GM13977 (cell line): ENCODE measurements at regions of chr12 and their contacts with region 1.

Region 1: DNA sequence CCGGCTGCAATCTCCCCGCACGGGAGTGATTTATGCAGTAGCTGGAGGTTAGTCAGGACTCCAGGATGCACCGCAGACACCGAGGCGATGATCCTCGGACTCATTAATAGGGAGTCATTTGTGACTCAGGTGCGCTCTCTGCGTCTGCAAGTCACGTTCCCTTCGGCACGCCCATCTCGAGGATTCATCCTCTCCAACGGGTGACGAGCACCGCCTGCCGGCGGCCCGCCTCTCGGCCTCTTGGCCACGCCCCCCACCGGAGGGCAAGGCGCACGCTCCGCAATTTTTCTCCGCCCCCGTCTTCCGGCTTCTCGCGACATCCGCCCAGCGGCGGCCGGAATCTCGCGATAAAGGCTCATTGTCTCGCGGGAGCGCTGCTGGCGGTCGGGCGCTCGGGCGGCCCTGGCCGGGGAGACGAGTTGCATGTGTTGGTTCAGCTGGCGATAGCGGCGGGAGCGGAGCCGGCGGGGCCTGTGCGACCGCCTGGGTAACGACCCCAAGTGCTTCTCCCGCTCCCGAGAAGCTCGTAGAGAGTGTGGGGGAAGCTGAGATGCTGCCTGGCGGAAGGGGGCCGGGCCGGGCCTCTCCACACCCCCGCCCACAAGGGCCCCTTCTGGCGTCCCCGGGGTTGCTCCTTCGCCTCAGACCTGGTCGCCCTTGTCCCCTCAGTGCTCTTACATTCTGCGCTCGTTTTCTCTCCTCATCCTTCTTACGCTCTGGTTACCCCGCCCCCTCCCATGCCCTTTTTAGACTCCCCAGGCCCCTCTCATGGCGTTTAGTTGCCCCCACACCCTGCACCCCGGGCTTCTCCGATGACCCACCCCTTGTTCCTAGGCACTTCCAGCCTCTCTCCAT is at the start of gene DENR:
- DNase-seq: peak; percentile 95
- CTCF ChIP-seq: peak; percentile 97

Region 2: GRCh38 chr12:122635471-122635870 is 117.2 kb before region 1 on chr12:
- in situ Hi-C with region 1: loop called (anchors 10 kb)
- DNase-seq: no peak
- CTCF ChIP-seq: no peak

Region 3: GRCh38 chr12:122834104-122834920 is 81.6 kb after region 1 on chr12:
- in situ Hi-C with region 1: no loop called
- DNase-seq: peak; percentile 41
- CTCF ChIP-seq: no peak